Dendritic cell treated with granulocyte-macrophage colony-stimulating factor and Interleukin-4, amounts not matched to agents 40 ng/mL and 50 ng/mL, for 4 days (primary cell): ENCODE measurements at regions of chr9 and their contacts with region 1.

Region 1: GRCh38 chr9:20980832-20981455 is 50.5 kb downstream of the HACD4 start:
- H3K4me3 Mint-ChIP-seq: no peak overlapping the region
- H3K27ac Mint-ChIP-seq: peak overlapping the region; percentile 60
- H3K4me1 Mint-ChIP-seq: peaks cover 14% of the 10 kb centered on the region
- H3K27me3 Mint-ChIP-seq: no peaks in the 10 kb centered on the region

Region 2: GRCh38 chr9:20544953-20545622 is 435.9 kb before region 1 on chr9:
- intact Hi-C with region 1: no loop called
- H3K4me3 Mint-ChIP-seq: no peak overlapping the region
- H3K27ac Mint-ChIP-seq: no peak overlapping the region
- H3K4me1 Mint-ChIP-seq: no peaks in the 10 kb centered on the region
- H3K27me3 Mint-ChIP-seq: no peaks in the 10 kb centered on the region

Region 3: DNA sequence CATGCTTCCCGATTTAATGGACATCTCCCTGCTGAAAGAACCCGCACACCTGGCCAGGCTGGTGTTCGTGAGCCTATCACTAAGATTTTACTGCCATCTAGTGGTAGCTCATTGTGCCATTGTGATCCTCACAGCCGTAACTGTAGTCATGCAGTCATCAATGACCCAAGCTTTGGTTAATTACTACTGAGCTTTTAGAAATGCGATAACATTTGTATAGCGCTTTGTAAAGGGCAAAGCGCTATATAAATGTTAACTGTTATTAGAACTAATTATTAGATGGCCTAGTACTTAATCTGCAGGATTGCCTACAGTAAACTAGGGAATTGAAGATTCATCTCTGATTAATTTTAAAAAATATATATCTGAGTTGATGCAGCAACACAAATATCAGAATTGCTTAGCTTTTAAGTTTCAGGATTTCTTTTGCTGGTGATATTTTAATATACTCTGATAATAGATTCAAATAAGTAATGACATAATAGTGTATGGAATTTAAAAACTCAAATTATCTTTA is 39.7 kb before region 1 on chr9:
- intact Hi-C with region 1: no loop called
- H3K4me3 Mint-ChIP-seq: no peak overlapping the region
- H3K27ac Mint-ChIP-seq: no peak overlapping the region
- H3K4me1 Mint-ChIP-seq: no peaks in the 10 kb centered on the region
- H3K27me3 Mint-ChIP-seq: no peaks in the 10 kb centered on the region

Region 4: GRCh38 chr9:21096172-21096900 is 115.4 kb after region 1 on chr9:
- intact Hi-C with region 1: loop called (anchors 5 kb)
- H3K4me3 Mint-ChIP-seq: peak overlapping the region; percentile 20
- H3K27ac Mint-ChIP-seq: peak overlapping the region; percentile 17
- H3K4me1 Mint-ChIP-seq: peaks cover 30% of the 10 kb centered on the region
- H3K27me3 Mint-ChIP-seq: no peaks in the 10 kb centered on the region